PC-9 (cell line): ENCODE measurements at regions of chr1 and their contacts with region 1.

Region 1: DNA sequence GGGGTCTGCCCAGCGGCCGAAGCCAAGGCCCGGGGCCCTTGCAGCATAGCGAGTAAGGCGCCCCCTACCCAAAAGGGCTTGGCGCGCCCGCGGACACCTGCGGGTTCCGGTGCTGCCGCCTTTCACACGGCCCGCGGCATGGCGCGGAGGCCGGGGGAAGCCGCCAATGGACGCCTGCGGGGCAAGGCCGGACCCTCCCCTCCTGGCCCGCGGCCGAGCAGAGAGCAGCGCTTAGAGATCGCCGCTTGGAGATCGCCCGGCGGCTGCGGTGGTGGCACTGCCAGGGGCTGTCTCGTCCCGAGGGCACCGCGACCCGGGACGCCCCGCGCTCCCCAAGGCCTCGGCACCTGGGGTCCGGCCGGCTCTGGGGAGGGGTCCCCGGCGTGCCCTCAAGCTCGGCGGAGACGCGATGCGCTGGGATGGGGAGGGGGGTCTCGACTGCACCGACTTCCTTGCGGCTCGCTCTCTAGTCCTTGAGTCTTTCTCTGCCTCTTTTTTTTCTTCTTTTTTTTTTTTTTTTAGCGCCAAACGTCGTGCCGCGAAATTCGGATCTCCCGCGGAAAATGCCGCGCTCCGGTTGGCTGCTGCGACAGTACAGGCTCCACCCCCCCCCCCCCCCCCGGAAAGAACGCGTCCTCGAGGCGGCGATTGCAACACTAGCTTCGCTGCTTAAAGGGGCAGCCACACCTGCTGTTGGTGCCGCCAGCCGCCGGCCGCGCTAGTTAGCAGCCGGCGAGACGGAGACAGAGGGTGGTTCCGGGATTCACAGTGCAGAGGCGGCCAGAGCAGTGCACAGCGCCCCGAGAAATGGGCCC is at the start of gene E2F2:
- DNase-seq: peak; percentile 70 to 73
- H3K4me3 ChIP-seq: peak within 1 kb of the TSS; percentile 65
- H3K27ac ChIP-seq: peak within 1 kb of the TSS; percentile 12; the same call in 1 of the 2 replicates
- H3K4me1 ChIP-seq: peaks cover 70% of the 10 kb centered on the region
- H3K27me3 ChIP-seq: no peaks in the 10 kb centered on the region
- CTCF ChIP-seq: no peak; the same call in 1 of the 2 replicates
- total RNA-seq, gene E2F2: 7.6 and 9.0 TPM in 2 replicates

Region 2: GRCh38 chr1:23242414-23242813 is 288.5 kb before region 1 on chr1:
- CTCF ChIA-PET with region 1: no interaction called
- POLR2A ChIA-PET with region 1: no interaction called
- intact Hi-C with region 1: no loop called
- DNase-seq: no peak
- H3K4me3 ChIP-seq: no peak overlapping the region
- H3K27ac ChIP-seq: no peak overlapping the region
- H3K4me1 ChIP-seq: no peaks in the 10 kb centered on the region
- H3K27me3 ChIP-seq: no peaks in the 10 kb centered on the region
- CTCF ChIP-seq: no peak

Region 3: GRCh38 chr1:23452011-23452411 is 78.9 kb before region 1 on chr1:
- CTCF ChIA-PET with region 1: interaction called, 7 read pairs
- POLR2A ChIA-PET with region 1: interaction called, 3 read pairs
- intact Hi-C with region 1: loop called (anchors 2 kb)
- DNase-seq: peak; percentile 91 to 96
- H3K4me3 ChIP-seq: no peak overlapping the region
- H3K27ac ChIP-seq: no peak overlapping the region
- H3K4me1 ChIP-seq: peaks cover 33% of the 10 kb centered on the region
- H3K27me3 ChIP-seq: no peaks in the 10 kb centered on the region
- CTCF ChIP-seq: no peak

Region 4: DNA sequence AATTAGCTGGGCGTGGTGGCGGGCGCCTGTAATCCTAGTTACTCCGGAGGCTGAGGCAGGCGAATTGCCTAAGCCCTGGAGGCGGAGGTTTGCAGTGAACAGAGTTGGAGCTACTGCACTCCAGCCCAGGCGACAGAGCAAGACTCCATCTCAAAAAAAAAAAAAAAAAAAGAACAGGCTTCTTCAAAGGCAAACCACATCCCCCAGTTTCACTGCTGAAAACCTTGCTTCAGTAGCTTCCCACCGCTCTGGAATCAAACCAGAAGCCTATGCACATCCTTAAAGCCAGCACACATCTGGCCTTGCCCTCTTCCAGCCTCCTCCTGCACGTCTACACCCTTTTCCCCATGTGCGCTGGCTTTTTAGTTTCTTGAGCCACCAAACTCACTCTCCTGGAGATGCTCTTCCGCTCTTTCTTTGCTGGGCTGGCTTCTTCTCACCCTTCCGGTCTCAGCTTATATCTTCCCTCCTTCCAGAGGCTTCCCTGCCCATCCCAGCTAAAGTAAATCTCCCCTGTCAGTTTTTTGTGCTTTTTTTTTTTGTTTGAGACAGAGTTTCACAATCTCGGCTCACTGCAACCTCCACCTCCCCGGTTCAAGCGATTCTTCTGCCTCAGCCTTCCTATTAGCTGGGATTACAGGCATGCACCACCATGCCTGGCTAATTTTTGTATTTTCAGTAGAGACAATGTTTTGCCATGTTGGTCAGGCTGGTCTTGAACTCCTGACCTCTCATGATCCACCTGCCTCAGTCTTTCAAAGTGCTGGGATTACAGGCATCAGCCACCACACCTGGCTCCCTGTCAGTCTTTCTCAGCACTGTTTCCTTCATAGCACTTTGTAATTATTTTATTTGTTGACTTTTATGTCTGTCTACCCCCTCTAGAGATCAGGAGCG is 70.4 kb after region 1 on chr1:
- CTCF ChIA-PET with region 1: no interaction called
- POLR2A ChIA-PET with region 1: no interaction called
- intact Hi-C with region 1: no loop called
- DNase-seq: no peak
- H3K4me3 ChIP-seq: no peak overlapping the region
- H3K27ac ChIP-seq: no peak overlapping the region
- H3K4me1 ChIP-seq: peaks cover 39% of the 10 kb centered on the region
- H3K27me3 ChIP-seq: no peaks in the 10 kb centered on the region
- CTCF ChIP-seq: no peak